Posterior cingulate gyrus (tissue), 11 donors: ENCODE measurements at regions of chr15 and their contacts with region 1.

Region 1: GRCh38 chr15:56805466-56806146 is 72.3 kb upstream of the ZNF280D start:
- DNase-seq: peak in 3 of 10 donors; percentile 6 to 30 (median 24)

Region 2: GRCh38 chr15:57138349-57138788 is 332.8 kb after region 1 on chr15:
- intact Hi-C with region 1: loop called (anchors 5 kb)
- DNase-seq: peak in 1 of 10 donors; percentile 86